ENCODE measurements at regions of chr1 and their contacts with region 1.

Region 1: GRCh38 chr1:108643492-108644335 is 17.2 kb downstream of the HENMT1 start:
- DNase-seq: peak; percentile 74
- ATAC-seq: no peak
- H3K4me3 Mint-ChIP-seq: no peak overlapping the region
- H3K27ac Mint-ChIP-seq: peak overlapping the region; percentile 100
- H3K4me1 Mint-ChIP-seq: peaks cover 75% of the 10 kb centered on the region
- H3K27me3 Mint-ChIP-seq: no peaks in the 10 kb centered on the region

Region 2: GRCh38 chr1:108512239-108512981 is 131.3 kb before region 1 on chr1:
- CTCF ChIA-PET with region 1: interaction called, 62 read pairs
- DNase-seq: no peak
- ATAC-seq: no peak
- H3K4me3 Mint-ChIP-seq: no peak overlapping the region
- H3K27ac Mint-ChIP-seq: no peak overlapping the region
- H3K4me1 Mint-ChIP-seq: no peaks in the 10 kb centered on the region
- H3K27me3 Mint-ChIP-seq: peaks cover 48% of the 10 kb centered on the region

Region 3: DNA sequence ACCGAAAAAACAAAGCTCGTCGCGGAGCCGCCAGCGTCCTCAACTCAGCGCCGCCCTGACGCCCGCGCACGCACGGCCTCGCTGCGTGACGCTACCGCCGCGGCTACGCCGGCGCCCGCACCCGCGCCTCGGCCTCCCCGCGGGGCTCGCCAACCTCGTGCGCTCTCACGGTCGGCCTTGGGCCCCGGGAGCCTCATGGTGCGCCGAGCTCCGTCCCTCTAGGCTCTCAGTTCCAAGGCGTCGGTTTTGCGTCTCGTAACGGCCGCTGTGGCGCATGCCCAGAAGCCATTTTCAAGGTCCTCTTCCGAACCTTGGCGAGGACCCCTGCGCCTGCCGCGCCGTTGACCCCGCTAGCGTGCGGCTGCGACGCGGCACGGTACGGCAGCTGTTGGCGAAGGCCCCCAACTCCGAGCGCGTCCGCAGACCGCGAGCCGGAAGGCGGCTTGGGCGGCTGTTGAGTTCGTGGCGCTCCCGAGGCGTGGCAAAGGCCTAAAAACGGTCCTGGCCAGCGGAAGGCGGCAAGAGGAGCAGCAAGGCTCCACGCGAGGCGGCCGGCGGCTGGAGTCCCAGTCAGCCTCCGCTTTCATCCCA is 17.4 kb after region 1 on chr1 and contains the start of gene HENMT1:
- CTCF ChIA-PET with region 1: interaction called, 35 read pairs
- DNase-seq: peak; percentile 86
- ATAC-seq: peak; percentile 85
- H3K4me3 Mint-ChIP-seq: peak within 1 kb of the TSS; percentile 82
- H3K27ac Mint-ChIP-seq: peak within 1 kb of the TSS; percentile 96
- H3K4me1 Mint-ChIP-seq: peaks cover 44% of the 10 kb centered on the region
- H3K27me3 Mint-ChIP-seq: no peaks in the 10 kb centered on the region
- total RNA-seq, gene HENMT1: 34.1 to 36.0 TPM

Measured in activated CD8-positive, alpha-beta memory T cell treated with anti-CD3 and anti-CD28 coated beads, Interleukin-2, amount 10 ng/mL, durations not matched to agents 7 days and 5 days (primary cell).